Psoas muscle (tissue), 8 donors: ENCODE measurements at regions of chr3 and their contacts with region 1.

Region 1: GRCh38 chr3:42880601-42881451 is 5.1 kb upstream of the CYP8B1 start:
- DNase-seq: peak; percentile 86 to 94
- ATAC-seq: peak; percentile 98 to 100 (median 100)
- H3K4me3 ChIP-seq: peak overlapping the region; percentile 81
- H3K27ac ChIP-seq: peak overlapping the region; percentile 76
- H3K4me1 ChIP-seq: no peaks in the 10 kb centered on the region
- H3K27me3 ChIP-seq: no peaks in the 10 kb centered on the region
- CTCF ChIP-seq: peak; percentile 95

Region 2: GRCh38 chr3:42377681-42378080 is 503.1 kb before region 1 on chr3:
- intact Hi-C with region 1: no loop called
- DNase-seq: no peak
- ATAC-seq: no peak
- H3K4me3 ChIP-seq: no peak overlapping the region
- H3K27ac ChIP-seq: no peak overlapping the region
- H3K4me1 ChIP-seq: no peaks in the 10 kb centered on the region
- H3K27me3 ChIP-seq: no peaks in the 10 kb centered on the region
- CTCF ChIP-seq: no peak

Region 3: DNA sequence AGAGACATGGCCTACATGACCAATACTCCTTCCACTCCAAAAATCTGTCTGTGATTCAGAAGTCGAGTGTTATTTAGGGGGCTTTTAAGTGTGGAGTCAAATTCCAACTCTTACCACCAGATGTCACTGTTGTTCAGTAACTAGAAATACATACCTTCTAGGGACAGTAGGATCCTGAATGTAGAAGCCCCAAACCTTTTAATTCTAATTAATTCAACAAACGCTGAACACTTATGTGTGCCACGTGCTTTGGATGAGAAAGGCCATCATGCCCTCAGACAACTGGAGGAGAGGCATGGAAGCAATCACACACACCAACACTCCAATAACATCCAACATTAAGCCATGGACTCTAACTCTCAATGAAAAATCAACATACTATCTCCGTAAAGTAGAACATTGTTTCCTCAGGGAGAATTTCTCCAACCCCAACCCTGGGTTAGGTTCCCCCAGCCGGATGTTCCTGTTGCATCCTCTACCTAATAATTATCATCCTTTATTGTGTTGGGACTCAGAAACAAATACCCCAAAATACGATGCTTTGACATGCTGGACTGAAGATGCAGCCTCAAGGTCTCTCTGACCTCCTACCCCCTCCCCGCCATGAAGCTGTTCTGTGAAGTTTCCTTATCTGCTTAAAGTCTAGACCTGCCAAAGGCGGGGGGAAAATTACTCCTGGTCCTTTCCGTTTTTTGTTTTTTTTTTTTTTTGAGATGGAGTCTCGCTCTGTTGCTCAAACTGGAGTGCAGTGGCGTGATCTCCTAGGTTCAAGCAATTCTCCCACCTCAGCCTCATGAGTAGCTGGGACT is 99.7 kb before region 1 on chr3:
- intact Hi-C with region 1: loop called (anchors 1 to 2 kb)
- DNase-seq: no peak
- ATAC-seq: peak; percentile 70 to 88 (median 82)
- H3K4me3 ChIP-seq: no peak overlapping the region
- H3K27ac ChIP-seq: no peak overlapping the region
- H3K4me1 ChIP-seq: no peaks in the 10 kb centered on the region
- H3K27me3 ChIP-seq: no peaks in the 10 kb centered on the region
- CTCF ChIP-seq: peak; percentile 82

Region 4: GRCh38 chr3:42831321-42831713 is 49.5 kb before region 1 on chr3:
- intact Hi-C with region 1: loop called (anchors 2 to 5 kb)
- DNase-seq: peak; percentile 64 to 69
- ATAC-seq: peak; percentile 49 to 84 (median 73)
- H3K4me3 ChIP-seq: no peak overlapping the region
- H3K27ac ChIP-seq: no peak overlapping the region
- H3K4me1 ChIP-seq: peaks cover 4% of the 10 kb centered on the region
- H3K27me3 ChIP-seq: no peaks in the 10 kb centered on the region
- CTCF ChIP-seq: peak; percentile 62

Region 5: GRCh38 chr3:42839616-42840015 is 41.2 kb before region 1 on chr3:
- intact Hi-C with region 1: loop called in 1 of 2 experiments (anchors 5 kb)
- DNase-seq: no peak
- ATAC-seq: peak; percentile 81 to 97 (median 92)
- H3K4me3 ChIP-seq: no peak overlapping the region
- H3K27ac ChIP-seq: no peak overlapping the region
- H3K4me1 ChIP-seq: no peaks in the 10 kb centered on the region
- H3K27me3 ChIP-seq: no peaks in the 10 kb centered on the region
- CTCF ChIP-seq: peak; percentile 80